ENCODE measurements at regions of chr22 and their contacts with region 1.

Region 1: GRCh38 chr22:41381329-41382097 is at the start of gene TEF:
- DNase-seq: peak; percentile 95 to 100 (median 98)
- ATAC-seq: peak; percentile 83 to 86 (median 86)
- H3K4me3 ChIP-seq: peak within 1 kb of the TSS; percentile 66 to 80
- H3K4me3 Mint-ChIP-seq: peak within 1 kb of the TSS; percentile 87 to 92 (median 88)
- H3K27ac ChIP-seq: peak within 1 kb of the TSS; percentile 99
- H3K27ac Mint-ChIP-seq: peak within 1 kb of the TSS; percentile 96 to 97
- H3K4me1 ChIP-seq: peaks cover 4 to 22% of the 10 kb centered on the region in 2 experiments
- H3K4me1 Mint-ChIP-seq: peaks cover 9 to 23% (median 20%) of the 10 kb centered on the region in 3 donors
- H3K27me3 ChIP-seq: no peaks in the 10 kb centered on the region
- H3K27me3 Mint-ChIP-seq: no peaks in the 10 kb centered on the region
- total RNA-seq, gene TEF: 4.1 to 10.8 (median 4.6) TPM

Region 2: DNA sequence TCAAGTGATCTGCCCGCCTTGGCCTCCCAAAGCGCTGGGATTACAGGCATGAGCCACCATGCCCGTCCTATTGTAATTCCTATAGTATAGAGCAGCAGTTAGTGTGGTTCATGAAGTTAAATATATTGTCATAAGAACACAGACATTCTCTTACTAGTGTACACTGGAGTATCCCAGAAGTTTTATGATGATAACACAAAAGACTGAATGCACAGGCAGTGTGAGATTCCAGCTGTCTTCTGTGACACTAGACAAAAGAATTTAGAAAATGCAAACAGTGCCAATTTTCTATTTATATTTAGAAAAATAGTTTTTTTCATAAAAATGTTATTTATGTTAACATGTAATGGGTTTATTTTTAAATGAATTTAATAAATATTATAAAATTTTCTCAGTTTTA is 469.7 kb before region 1 on chr22:
- CTCF ChIA-PET with region 1: no interaction called
- POLR2A ChIA-PET with region 1: interaction called in 1 of 2 experiments, 16 read pairs
- DNase-seq: no peak
- ATAC-seq: no peak
- H3K4me3 ChIP-seq: no peak overlapping the region
- H3K4me3 Mint-ChIP-seq: no peak overlapping the region
- H3K27ac ChIP-seq: no peak overlapping the region
- H3K27ac Mint-ChIP-seq: no peak overlapping the region
- H3K4me1 ChIP-seq: no peaks in the 10 kb centered on the region
- H3K4me1 Mint-ChIP-seq: no peaks in the 10 kb centered on the region
- H3K27me3 ChIP-seq: no peaks in the 10 kb centered on the region
- H3K27me3 Mint-ChIP-seq: no peaks in the 10 kb centered on the region

Region 3: GRCh38 chr22:41301105-41302020 is 80.2 kb before region 1 on chr22 and contains the start of gene ZC3H7B:
- CTCF ChIA-PET with region 1: interaction called in 1 of 2 experiments, 5 read pairs
- POLR2A ChIA-PET with region 1: interaction called, 3 to 12 read pairs
- DNase-seq: peak; percentile 64 to 92 (median 82)
- ATAC-seq: peak; percentile 97 to 98 (median 98)
- H3K4me3 ChIP-seq: peak within 1 kb of the TSS; percentile 85 to 97
- H3K4me3 Mint-ChIP-seq: peak within 1 kb of the TSS; percentile 71 to 81 (median 74)
- H3K27ac ChIP-seq: peak within 1 kb of the TSS; percentile 92
- H3K27ac Mint-ChIP-seq: peak within 1 kb of the TSS; percentile 85 to 87
- H3K4me1 ChIP-seq: peaks cover 3 to 24% of the 10 kb centered on the region in 2 experiments
- H3K4me1 Mint-ChIP-seq: peaks cover 25 to 33% (median 32%) of the 10 kb centered on the region in 3 donors
- H3K27me3 ChIP-seq: peaks cover 0 to 2% of the 10 kb centered on the region in 2 experiments
- H3K27me3 Mint-ChIP-seq: no peaks in the 10 kb centered on the region
- total RNA-seq, gene ZC3H7B: 38.5 to 50.3 (median 47.9) TPM

Region 4: DNA sequence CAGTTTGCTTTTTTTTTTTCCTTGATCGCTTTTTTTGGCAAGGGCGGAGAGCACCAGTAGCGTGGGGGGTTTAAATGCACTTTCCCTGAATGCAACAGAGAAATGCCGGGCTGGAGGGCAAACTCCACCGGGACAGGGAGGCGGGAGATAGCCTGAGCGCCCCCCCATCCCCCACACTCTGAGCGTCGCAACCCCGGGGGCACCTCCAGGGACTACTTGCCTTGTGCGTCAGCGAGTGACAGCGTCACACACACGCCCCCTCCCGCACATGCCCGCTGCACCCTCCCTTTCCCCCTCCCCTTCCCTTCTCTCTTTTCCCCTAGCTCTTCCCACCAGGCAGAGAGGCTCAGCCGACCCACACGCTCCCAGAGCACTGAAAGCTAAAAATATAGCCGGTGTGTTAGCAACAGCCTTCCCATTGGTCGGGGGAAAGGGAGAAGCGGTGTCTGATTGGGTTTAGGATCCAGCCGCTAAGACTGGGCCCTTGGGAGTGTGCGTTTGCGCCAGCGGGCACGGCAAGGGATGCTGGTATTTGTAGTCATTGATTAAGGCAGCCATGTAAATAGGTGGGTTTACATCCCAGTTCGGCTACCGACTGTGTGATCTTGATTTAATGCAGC is 66.8 kb after region 1 on chr22:
- CTCF ChIA-PET with region 1: interaction called in 1 of 2 experiments, 3 read pairs
- POLR2A ChIA-PET with region 1: interaction called, 3 to 13 read pairs
- DNase-seq: peak; percentile 76 to 95 (median 87)
- ATAC-seq: peak; percentile 69 to 74 (median 70)
- H3K4me3 ChIP-seq: peak overlapping the region; percentile 70 to 86
- H3K4me3 Mint-ChIP-seq: peak overlapping the region; percentile 89 to 99 (median 89)
- H3K27ac ChIP-seq: peak overlapping the region; percentile 96
- H3K27ac Mint-ChIP-seq: peak overlapping the region; percentile 88 to 93
- H3K4me1 ChIP-seq: peaks cover 8 to 33% of the 10 kb centered on the region in 2 experiments
- H3K4me1 Mint-ChIP-seq: peaks cover 16 to 28% (median 17%) of the 10 kb centered on the region in 3 donors
- H3K27me3 ChIP-seq: no peaks in the 10 kb centered on the region
- H3K27me3 Mint-ChIP-seq: no peaks in the 10 kb centered on the region

Region 5: GRCh38 chr22:41636467-41636866 is 255.0 kb after region 1 on chr22:
- CTCF ChIA-PET with region 1: interaction called in 1 of 2 experiments, 11 read pairs
- POLR2A ChIA-PET with region 1: no interaction called
- DNase-seq: no peak
- ATAC-seq: no peak
- H3K4me3 ChIP-seq: no peak overlapping the region
- H3K4me3 Mint-ChIP-seq: no peak overlapping the region
- H3K27ac ChIP-seq: no peak overlapping the region
- H3K27ac Mint-ChIP-seq: no peak overlapping the region
- H3K4me1 ChIP-seq: no peaks in the 10 kb centered on the region
- H3K4me1 Mint-ChIP-seq: peaks cover 7 to 14% (median 11%) of the 10 kb centered on the region in 3 donors
- H3K27me3 ChIP-seq: no peaks in the 10 kb centered on the region
- H3K27me3 Mint-ChIP-seq: no peaks in the 10 kb centered on the region

Measured in T-cell (primary cell).